ENCODE measurements at regions of chr21 and their contacts with region 1.

Region 1: GRCh38 chr21:38965909-38966504 is 160.3 kb downstream of the ETS2 start:
- DNase-seq: no peak
- H3K4me3 ChIP-seq: no peak overlapping the region
- H3K27ac ChIP-seq: no peak overlapping the region
- H3K4me1 ChIP-seq: no peaks in the 10 kb centered on the region
- H3K27me3 ChIP-seq: no peaks in the 10 kb centered on the region
- CTCF ChIP-seq: no peak
- EP300 ChIP-seq: no peak
- POLR2A ChIP-seq: no peak

Region 2: GRCh38 chr21:38979228-38980121 is 13.5 kb after region 1 on chr21:
- intact Hi-C with region 1: loop called (anchors 2 kb)
- DNase-seq: no peak
- H3K4me3 ChIP-seq: no peak overlapping the region
- H3K27ac ChIP-seq: no peak overlapping the region
- H3K4me1 ChIP-seq: peaks cover 0 to 5% (median 3%) of the 10 kb centered on the region in 4 donors
- H3K27me3 ChIP-seq: no peaks in the 10 kb centered on the region
- CTCF ChIP-seq: no peak
- EP300 ChIP-seq: no peak
- POLR2A ChIP-seq: no peak